ENCODE measurements at regions of chr17 and their contacts with region 1.

Region 1: GRCh38 chr17:40480501-40481003 is 20.9 kb downstream of the TNS4 start:
- DNase-seq: peak; percentile 95
- ATAC-seq: peak; percentile 94
- H3K4me3 Mint-ChIP-seq: peak overlapping the region; percentile 60
- H3K27ac Mint-ChIP-seq: peak overlapping the region; percentile 96
- H3K4me1 Mint-ChIP-seq: peaks cover 70% of the 10 kb centered on the region
- H3K27me3 Mint-ChIP-seq: no peaks in the 10 kb centered on the region

Region 2: DNA sequence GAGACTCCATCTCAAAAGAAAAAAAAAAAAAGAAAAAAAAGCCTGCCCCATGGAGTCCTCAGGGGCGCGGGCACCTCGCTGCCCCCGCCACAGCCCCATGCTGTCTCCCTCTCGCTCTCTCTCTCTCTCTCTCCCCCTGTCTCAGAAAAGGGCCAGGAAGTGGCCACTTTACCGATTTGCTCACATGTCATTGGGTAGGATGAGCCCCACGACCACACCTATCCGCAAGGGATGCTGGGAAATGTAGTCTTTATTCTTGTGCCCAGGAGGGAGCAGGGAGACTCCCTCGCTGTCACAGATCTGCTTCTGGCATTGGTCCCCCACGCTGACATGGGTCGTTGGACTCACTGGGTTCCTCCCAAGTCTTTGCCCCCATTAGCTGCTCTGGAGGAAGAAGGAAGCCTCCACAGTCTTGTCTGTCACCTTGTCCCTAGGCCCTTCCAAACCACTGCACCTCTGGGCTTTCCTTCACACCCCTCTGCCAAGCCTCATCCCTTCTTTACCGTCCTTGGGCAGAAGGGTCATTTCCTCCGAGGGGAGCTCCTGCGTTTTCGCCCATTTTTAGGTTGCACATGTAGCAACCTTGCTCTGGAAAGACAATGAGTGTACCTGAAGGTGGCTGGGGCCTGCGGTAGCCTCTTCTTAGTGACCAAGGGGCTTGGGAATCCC is 109.2 kb before region 1 on chr17:
- CTCF ChIA-PET with region 1: no interaction called
- POLR2A ChIA-PET with region 1: no interaction called
- intact Hi-C with region 1: loop called in 1 of 2 experiments (anchors 1 kb)
- DNase-seq: peak; percentile 57
- ATAC-seq: peak; percentile 75
- H3K4me3 Mint-ChIP-seq: no peak overlapping the region
- H3K27ac Mint-ChIP-seq: no peak overlapping the region
- H3K4me1 Mint-ChIP-seq: peaks cover 33% of the 10 kb centered on the region
- H3K27me3 Mint-ChIP-seq: no peaks in the 10 kb centered on the region

Region 3: GRCh38 chr17:40422990-40423616 is 57.4 kb before region 1 on chr17:
- CTCF ChIA-PET with region 1: interaction called, 5 read pairs
- POLR2A ChIA-PET with region 1: interaction called, 7 read pairs
- intact Hi-C with region 1: loop called in 1 of 2 experiments (anchors 10 kb)
- DNase-seq: no peak
- ATAC-seq: no peak
- H3K4me3 Mint-ChIP-seq: no peak overlapping the region
- H3K27ac Mint-ChIP-seq: no peak overlapping the region
- H3K4me1 Mint-ChIP-seq: peaks cover 43% of the 10 kb centered on the region
- H3K27me3 Mint-ChIP-seq: no peaks in the 10 kb centered on the region

Region 4: DNA sequence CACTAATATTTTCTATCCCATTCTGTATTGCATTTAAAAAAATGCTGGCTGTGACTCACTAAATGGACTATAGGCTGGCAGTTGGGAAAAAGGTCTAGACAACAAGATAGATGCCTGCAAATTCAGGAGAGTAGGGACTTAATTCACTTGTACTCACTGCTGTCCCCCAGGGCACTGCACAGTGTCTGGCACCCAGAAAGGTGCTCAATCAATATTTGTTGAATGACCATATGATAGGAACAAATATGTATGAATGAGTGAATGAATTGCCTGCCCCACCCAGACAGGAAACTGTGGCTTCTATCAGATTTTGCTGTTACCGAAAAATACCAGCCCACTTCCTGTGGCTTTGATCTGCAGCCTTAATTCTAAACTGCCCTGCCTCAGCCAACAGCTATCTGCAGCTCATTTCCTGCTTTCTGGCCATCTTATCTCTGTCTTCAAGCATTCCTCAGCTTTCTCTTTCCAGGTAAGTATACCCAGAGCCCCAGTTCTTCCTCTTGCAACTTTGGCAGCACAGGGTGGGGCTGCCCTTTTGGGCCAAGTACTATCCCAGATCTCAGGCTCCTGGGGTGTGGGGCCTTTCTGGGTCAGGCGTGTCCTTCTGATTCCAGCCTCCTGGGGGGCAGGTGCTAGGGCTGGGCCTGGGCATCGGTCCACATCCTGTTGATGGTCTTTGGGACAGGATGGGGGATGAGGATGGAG is 36.2 kb after region 1 on chr17:
- CTCF ChIA-PET with region 1: interaction called, 4 read pairs
- POLR2A ChIA-PET with region 1: no interaction called
- intact Hi-C with region 1: loop called (anchors 1 kb)
- DNase-seq: peak; percentile 77
- ATAC-seq: peak; percentile 76
- H3K4me3 Mint-ChIP-seq: peak overlapping the region; percentile 76
- H3K27ac Mint-ChIP-seq: peak overlapping the region; percentile 73
- H3K4me1 Mint-ChIP-seq: peaks cover 57% of the 10 kb centered on the region
- H3K27me3 Mint-ChIP-seq: peaks cover 2% of the 10 kb centered on the region